ENCODE measurements at regions of chr6 and their contacts with region 1.

Region 1: GRCh38 chr6:149925974-149926777 is 3.3 kb upstream of the RAET1G start:
- DNase-seq: peak; percentile 93 to 98
- H3K4me3 ChIP-seq: peak overlapping the region; percentile 11
- CTCF ChIP-seq: peak in 1 of 3 donors; percentile 97
- POLR2A ChIP-seq: no peak

Region 2: GRCh38 chr6:148884461-148884860 is 1041.7 kb before region 1 on chr6:
- intact Hi-C with region 1: loop called (anchors 5 kb)
- DNase-seq: no peak
- H3K4me3 ChIP-seq: no peak overlapping the region
- CTCF ChIP-seq: no peak
- POLR2A ChIP-seq: no peak

Region 3: GRCh38 chr6:149834513-149835481 is 91.4 kb before region 1 on chr6:
- intact Hi-C with region 1: loop called (anchors 1 kb)
- DNase-seq: peak in 1 of 2 donors; percentile 64
- H3K4me3 ChIP-seq: no peak overlapping the region
- CTCF ChIP-seq: peak in 1 of 3 donors; percentile 76
- POLR2A ChIP-seq: no peak